Heart right ventricle (tissue), 16 donors: ENCODE measurements at regions of chr9 and their contacts with region 1.

Region 1: DNA sequence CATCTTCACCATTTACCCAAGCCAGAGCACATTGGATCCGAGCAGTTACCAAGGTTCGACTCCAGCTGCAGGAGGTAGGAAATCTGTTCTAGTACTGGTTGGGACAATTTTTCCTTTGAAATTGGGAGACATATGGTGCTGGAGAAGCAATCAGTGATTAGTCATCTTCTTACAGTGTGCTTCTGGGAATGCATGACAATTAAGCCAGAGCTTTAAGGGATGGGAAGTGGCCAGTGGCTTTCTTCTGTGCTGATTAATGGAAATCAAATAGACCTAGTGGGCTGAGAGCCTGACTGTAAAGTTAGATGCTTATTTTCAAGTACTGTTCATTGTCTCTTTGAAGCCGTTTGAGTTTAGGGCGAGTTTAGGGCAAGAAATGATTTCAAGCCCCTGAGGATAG is 152.1 kb downstream of the UNC13B start:
- DNase-seq: no peak
- ATAC-seq: no peak
- H3K4me3 ChIP-seq: no peak overlapping the region
- H3K27ac ChIP-seq: no peak overlapping the region
- H3K4me1 ChIP-seq: peaks cover 0 to 26% (median 14%) of the 10 kb centered on the region in 9 donors
- H3K27me3 ChIP-seq: no peaks in the 10 kb centered on the region
- CTCF ChIP-seq: no peak

Region 2: GRCh38 chr9:35470894-35471293 is 157.0 kb after region 1 on chr9:
- intact Hi-C with region 1: loop called in 4 of 10 experiments (anchors 5 to 10 kb)
- DNase-seq: no peak
- ATAC-seq: no peak
- H3K4me3 ChIP-seq: no peak overlapping the region
- H3K27ac ChIP-seq: no peak overlapping the region
- H3K4me1 ChIP-seq: no peaks in the 10 kb centered on the region
- H3K27me3 ChIP-seq: no peaks in the 10 kb centered on the region
- CTCF ChIP-seq: no peak

Region 3: GRCh38 chr9:35481347-35481975 is 167.5 kb after region 1 on chr9:
- intact Hi-C with region 1: loop called in 4 of 10 experiments (anchors 5 to 10 kb)
- DNase-seq: peak in 1 of 2 donors; percentile 51
- ATAC-seq: peak in 4 of 8 donors; percentile 57 to 65 (median 60)
- H3K4me3 ChIP-seq: no peak overlapping the region
- H3K27ac ChIP-seq: no peak overlapping the region
- H3K4me1 ChIP-seq: peaks cover 0 to 6% (median 0%) of the 10 kb centered on the region in 9 donors
- H3K27me3 ChIP-seq: no peaks in the 10 kb centered on the region
- CTCF ChIP-seq: peak; percentile 26 to 72 (median 67)